ENCODE measurements at regions of chr1 and their contacts with region 1.

Region 1: GRCh38 chr1:58783993-58784757 is at the start of gene JUN:
- DNase-seq: peak; percentile 100
- ATAC-seq: peak; percentile 84
- total RNA-seq, gene JUN: 54.8 TPM

Region 2: GRCh38 chr1:58883037-58883887 is 99.1 kb after region 1 on chr1:
- intact Hi-C with region 1: loop called (anchors 10 kb)
- DNase-seq: peak; percentile 85
- ATAC-seq: peak; percentile 59

Region 3: GRCh38 chr1:59057211-59057694 is 273.1 kb after region 1 on chr1:
- intact Hi-C with region 1: loop called (anchors 10 kb)
- DNase-seq: peak; percentile 90
- ATAC-seq: peak; percentile 92

Region 4: DNA sequence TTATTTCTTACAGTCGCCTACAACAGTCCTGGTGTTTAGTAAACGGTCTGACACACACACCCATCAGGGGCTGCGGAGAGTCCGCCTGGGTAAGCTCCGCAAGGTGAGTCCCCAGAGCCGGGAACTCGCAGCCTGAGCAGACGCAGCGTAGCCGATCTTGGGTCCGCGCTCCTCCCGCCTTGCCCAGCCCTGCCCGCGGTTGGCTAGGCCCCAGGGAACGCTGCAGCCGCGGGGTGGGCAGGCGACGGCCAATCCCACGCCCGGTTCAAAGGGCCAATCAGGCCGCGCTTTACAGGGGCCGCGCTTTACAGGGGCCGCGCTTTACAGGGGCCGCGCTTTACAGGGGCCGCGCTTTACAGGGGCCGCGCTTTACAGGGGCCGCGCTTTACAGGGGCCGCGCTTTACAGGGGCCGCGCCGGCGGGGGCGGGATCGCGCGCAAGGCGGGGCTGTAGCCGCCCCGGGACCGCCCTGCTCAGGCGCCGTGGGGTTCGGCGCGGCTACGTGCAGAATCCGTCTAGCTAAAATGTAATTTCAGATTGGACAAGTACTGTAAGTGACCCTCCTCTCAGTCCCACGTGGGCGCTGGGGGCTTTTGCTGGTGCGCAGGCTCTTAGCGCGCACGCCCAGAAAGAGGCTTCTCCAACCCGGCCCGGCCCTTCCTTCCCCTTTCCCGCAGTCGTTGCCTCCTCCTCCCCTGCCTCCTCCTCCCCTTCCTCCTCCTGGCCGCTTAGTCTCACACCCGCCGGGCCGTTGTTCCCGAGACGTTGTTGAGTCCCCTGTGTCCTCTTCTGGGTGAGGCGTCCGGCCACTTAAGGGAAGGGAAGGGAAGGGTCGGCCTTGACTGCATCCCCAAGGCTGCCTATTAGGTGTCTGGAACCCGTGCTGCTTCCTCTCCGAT is 512.4 kb after region 1 on chr1 and contains the start of gene FGGY:
- intact Hi-C with region 1: loop called (anchors 2 kb)
- DNase-seq: peak; percentile 99
- ATAC-seq: peak; percentile 93
- total RNA-seq, gene FGGY: 23.1 TPM